ENCODE measurements at regions of chr2 and their contacts with region 1.

Region 1: GRCh38 chr2:10434886-10435819 is 13.0 kb downstream of the ODC1 start:
- DNase-seq: peak; percentile 54 to 96 (median 78)

Region 2: GRCh38 chr2:10122386-10123280 is 312.5 kb before region 1 on chr2 and contains the start of gene RRM2:
- intact Hi-C with region 1: loop called (anchors 1 kb)
- DNase-seq: peak; percentile 82 to 99 (median 92)

Region 3: GRCh38 chr2:10141736-10142642 is 293.2 kb before region 1 on chr2:
- intact Hi-C with region 1: no loop called
- DNase-seq: peak in 3 of 10 donors; percentile 32 to 83 (median 32)